ENCODE measurements at regions of chr17 and their contacts with region 1.

Region 1: GRCh38 chr17:1275962-1276736 is 3.3 kb upstream of the TRARG1 start:
- ATAC-seq: peak; percentile 51 to 95 (median 60)
- H3K4me3 ChIP-seq: no peak overlapping the region
- H3K27ac ChIP-seq: no peak overlapping the region
- H3K4me1 ChIP-seq: peaks cover 5 to 14% of the 10 kb centered on the region in 2 donors

Region 2: DNA sequence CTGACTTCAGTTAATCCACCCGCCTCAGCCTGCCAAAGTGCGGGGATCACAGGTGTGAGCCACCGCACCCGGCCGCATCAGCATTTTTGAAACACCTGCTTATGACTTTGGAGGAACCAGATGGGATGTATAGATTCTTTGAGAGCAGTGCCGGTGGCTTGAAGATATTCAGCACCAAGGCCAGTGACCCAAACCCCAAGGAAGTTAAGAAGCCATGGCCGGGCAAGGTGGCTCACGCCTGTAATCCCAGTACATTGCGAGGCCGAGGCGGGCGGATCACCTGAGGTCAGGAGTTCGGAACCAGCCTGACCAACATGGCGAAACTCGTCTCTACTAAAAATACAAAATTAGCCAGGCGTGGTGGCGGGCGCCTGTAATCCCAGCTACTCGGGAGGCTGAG is 47.2 kb after region 1 on chr17:
- in situ Hi-C with region 1: loop called in 1 of 9 experiments (anchors 10 kb)
- ATAC-seq: no peak
- H3K4me3 ChIP-seq: no peak overlapping the region
- H3K27ac ChIP-seq: no peak overlapping the region
- H3K4me1 ChIP-seq: no peaks in the 10 kb centered on the region

Region 3: GRCh38 chr17:1516388-1517161 is 240.4 kb after region 1 on chr17 and contains the start of gene INPP5K:
- in situ Hi-C with region 1: loop called in 6 of 9 experiments (anchors 10 to 25 kb)
- ATAC-seq: peak; percentile 79 to 98 (median 97)
- H3K4me3 ChIP-seq: peak within 1 kb of the TSS; percentile 55 to 92 (median 76)
- H3K27ac ChIP-seq: peak within 1 kb of the TSS; percentile 67 to 86
- H3K4me1 ChIP-seq: peaks cover 10 to 13% of the 10 kb centered on the region in 2 donors
- total RNA-seq, gene INPP5K: 10.3 to 28.6 (median 16.2) TPM